ENCODE measurements at regions of chr4 and their contacts with region 1.

Region 1: GRCh38 chr4:7434766-7435150 is at the start of gene PSAPL1:
- DNase-seq: peak; percentile 62 to 79
- H3K4me3 ChIP-seq: no peak within 1 kb of the TSS
- H3K27ac ChIP-seq: no peak within 1 kb of the TSS
- H3K4me1 ChIP-seq: peaks cover 26% of the 10 kb centered on the region
- H3K27me3 ChIP-seq: no peaks in the 10 kb centered on the region
- CTCF ChIP-seq: no peak
- total RNA-seq, gene PSAPL1: 0.15 TPM in 2 replicates

Region 2: GRCh38 chr4:7335344-7336069 is 99.3 kb before region 1 on chr4:
- CTCF ChIA-PET with region 1: no interaction called
- POLR2A ChIA-PET with region 1: interaction called, 10 read pairs
- intact Hi-C with region 1: no loop called
- DNase-seq: peak; percentile 51 to 79
- H3K4me3 ChIP-seq: no peak overlapping the region
- H3K27ac ChIP-seq: no peak overlapping the region
- H3K4me1 ChIP-seq: no peaks in the 10 kb centered on the region
- H3K27me3 ChIP-seq: no peaks in the 10 kb centered on the region
- CTCF ChIP-seq: peak; percentile 77

Measured in PC-9 (cell line).